Gastrocnemius medialis (tissue), 4 donors: ENCODE measurements at regions of chr22 and their contacts with region 1.

Region 1: DNA sequence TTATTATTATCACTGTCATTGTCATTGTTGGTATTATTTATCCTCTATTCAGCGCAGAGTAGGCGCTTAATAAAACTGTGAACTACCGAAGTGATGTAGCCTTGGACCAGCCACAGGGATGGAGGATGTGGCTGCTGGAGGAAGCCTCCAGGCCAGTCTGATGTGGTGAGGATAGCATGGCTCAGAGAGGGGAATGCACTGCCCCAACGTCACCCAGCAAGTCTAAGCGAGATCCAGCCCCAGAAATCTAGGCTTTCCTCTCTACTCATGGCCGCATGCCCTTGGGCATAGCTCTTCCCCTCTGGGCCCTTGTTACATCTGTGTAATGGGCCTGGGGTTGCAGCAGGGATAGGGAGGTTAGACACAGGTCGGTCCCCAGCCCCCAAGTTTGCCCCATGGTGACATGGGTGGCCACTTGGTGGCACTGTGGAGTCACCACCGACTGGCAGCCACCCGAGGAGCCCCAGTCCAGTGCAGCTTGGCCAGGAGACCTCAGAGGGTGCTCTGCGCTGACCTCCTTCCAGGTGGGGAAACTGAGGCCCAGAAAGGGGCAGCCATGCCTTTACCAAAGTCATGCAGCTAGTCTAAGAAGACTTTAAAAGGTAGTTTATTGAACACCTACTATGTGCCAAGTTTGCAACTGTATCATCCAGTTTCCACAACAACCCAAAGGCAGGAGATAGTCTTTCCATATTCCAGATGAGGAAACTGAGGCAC is 395.7 kb downstream of the MN1 start:
- DNase-seq: peak; percentile 23 to 49
- ATAC-seq: peak; percentile 62 to 91
- H3K4me3 ChIP-seq: no peak overlapping the region
- H3K27ac ChIP-seq: no peak overlapping the region
- H3K4me1 ChIP-seq: no peaks in the 10 kb centered on the region
- H3K27me3 ChIP-seq: peaks cover 0 to 3% (median 0%) of the 10 kb centered on the region in 3 donors
- CTCF ChIP-seq: peak; percentile 50 to 85 (median 79)
- POLR2A ChIP-seq: no peak

Region 2: GRCh38 chr22:26669060-26669481 is 736.8 kb before region 1 on chr22:
- in situ Hi-C with region 1: no loop called
- intact Hi-C with region 1: no loop called
- DNase-seq: no peak
- ATAC-seq: no peak
- H3K4me3 ChIP-seq: no peak overlapping the region
- H3K27ac ChIP-seq: no peak overlapping the region
- H3K4me1 ChIP-seq: peaks cover 12 to 14% of the 10 kb centered on the region in 2 donors
- H3K27me3 ChIP-seq: peaks cover 0 to 4% (median 0%) of the 10 kb centered on the region in 3 donors
- CTCF ChIP-seq: peak in 1 of 5 experiments; percentile 24
- POLR2A ChIP-seq: no peak

Region 3: GRCh38 chr22:27726697-27727449 is 321.0 kb after region 1 on chr22:
- in situ Hi-C with region 1: loop called in 1 of 4 experiments (anchors 25 kb)
- intact Hi-C with region 1: no loop called
- DNase-seq: no peak
- ATAC-seq: peak; percentile 16 to 50
- H3K4me3 ChIP-seq: no peak overlapping the region
- H3K27ac ChIP-seq: peak overlapping the region; percentile 29 to 69 (median 58)
- H3K4me1 ChIP-seq: peaks cover 23 to 28% of the 10 kb centered on the region in 2 donors
- H3K27me3 ChIP-seq: no peaks in the 10 kb centered on the region
- CTCF ChIP-seq: no peak
- POLR2A ChIP-seq: no peak